ENCODE measurements at regions of chr14 and their contacts with region 1.

Region 1: GRCh38 chr14:34098045-34098984 is 147.4 kb upstream of the EGLN3 start:
- DNase-seq: peak; percentile 54
- CTCF ChIP-seq: peak; percentile 43

Region 2: DNA sequence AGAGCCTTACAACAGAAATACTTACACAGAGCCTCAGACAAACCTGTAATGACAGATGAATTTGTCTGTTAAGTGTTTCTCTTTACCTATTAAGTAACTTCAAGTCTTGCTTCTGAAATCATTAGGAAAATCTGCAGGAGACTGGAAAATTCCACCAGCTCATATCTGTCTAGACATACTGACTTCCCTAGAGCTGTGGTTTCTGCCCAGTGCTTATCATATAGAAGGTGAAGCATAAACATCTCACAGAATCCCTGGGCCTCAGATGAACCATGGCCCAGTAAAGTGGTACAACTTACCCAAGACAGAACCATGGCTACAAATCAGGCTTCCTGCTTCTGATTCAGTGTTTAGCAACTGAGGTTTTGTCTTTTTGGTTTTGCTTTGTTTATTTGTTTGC is 239.0 kb before region 1 on chr14:
- in situ Hi-C with region 1: loop called (anchors 10 kb)
- DNase-seq: no peak
- CTCF ChIP-seq: no peak

Measured in GM13976 (cell line).